Panc1 (cell line): ENCODE measurements at regions of chr19 and their contacts with region 1.

Region 1: GRCh38 chr19:44903602-44904425 is 1.8 kb upstream of the APOE start:
- DNase-seq: no peak
- ATAC-seq: peak; percentile 62
- H3K4me3 ChIP-seq: no peak overlapping the region
- H3K27ac ChIP-seq: peak overlapping the region; percentile 70; the same call in 1 of the 2 replicates
- H3K4me1 ChIP-seq: peaks cover 9% of the 10 kb centered on the region
- H3K27me3 ChIP-seq: no peaks in the 10 kb centered on the region
- CTCF ChIP-seq: peak; percentile 98

Region 2: DNA sequence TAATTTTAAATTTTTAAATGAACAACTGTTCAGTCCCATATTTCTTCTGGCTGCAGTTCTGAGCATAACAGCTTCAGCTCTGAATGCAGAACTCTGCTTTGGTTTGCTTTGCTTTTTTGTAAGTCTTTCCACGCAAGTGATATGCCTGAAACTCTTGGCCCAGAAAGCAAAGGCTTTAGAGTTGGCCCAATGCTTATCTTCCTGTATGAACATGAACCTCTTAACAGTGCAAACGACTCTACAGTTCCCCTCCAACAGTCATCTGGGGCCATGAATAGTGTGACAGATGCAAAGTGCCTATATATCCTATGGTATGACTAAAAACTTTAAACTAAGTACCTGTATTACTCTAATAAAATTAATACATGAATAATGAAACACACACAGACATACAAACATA is 562.0 kb before region 1 on chr19:
- CTCF ChIA-PET with region 1: interaction called, 12 read pairs
- POLR2A ChIA-PET with region 1: no interaction called
- in situ Hi-C with region 1: no loop called
- intact Hi-C with region 1: no loop called
- DNase-seq: no peak
- ATAC-seq: no peak
- H3K4me3 ChIP-seq: no peak overlapping the region
- H3K27ac ChIP-seq: no peak overlapping the region
- H3K4me1 ChIP-seq: no peaks in the 10 kb centered on the region
- H3K27me3 ChIP-seq: no peaks in the 10 kb centered on the region
- CTCF ChIP-seq: no peak

Region 3: DNA sequence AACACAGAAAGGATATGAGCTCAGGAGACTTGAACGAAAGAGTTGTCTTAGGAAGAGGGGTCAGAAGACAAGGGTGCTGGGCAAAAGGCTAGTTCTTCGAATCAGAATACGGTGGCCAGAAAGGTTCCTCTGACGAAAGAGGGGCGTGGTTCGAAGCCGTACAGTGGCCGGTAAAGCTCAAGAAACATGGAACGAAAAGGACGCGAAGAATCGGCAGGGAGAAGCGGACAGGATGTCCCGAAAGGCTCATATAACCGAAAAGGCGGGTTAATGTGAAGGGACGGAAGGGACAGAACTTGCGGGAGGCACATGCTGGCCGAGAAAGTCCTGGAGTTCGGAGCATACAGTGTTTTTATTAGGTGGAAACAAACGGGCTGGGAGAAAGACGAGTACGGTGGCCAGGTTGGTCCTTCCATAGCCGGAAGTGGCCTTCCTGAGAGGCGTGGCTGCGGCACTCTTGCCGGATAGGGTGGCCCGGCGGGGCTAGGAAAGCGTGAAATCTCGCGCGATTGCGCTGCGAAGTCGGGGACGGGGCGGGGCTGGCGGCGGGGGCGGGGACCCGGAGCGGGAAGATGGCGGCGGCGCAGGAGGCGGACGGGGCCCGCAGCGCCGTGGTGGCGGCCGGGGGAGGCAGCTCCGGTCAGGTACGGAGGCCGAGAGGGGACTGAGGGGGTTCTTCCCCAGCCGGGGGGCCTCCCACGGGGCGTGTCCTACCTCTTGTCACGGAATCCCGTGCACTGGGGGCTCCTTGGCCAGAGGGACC is 51.2 kb after region 1 on chr19 and contains the start of gene CLPTM1:
- CTCF ChIA-PET with region 1: interaction called, 6 read pairs
- POLR2A ChIA-PET with region 1: no interaction called
- in situ Hi-C with region 1: no loop called
- intact Hi-C with region 1: loop called (anchors 5 kb)
- DNase-seq: peak; percentile 87
- ATAC-seq: peak; percentile 96
- H3K4me3 ChIP-seq: peak within 1 kb of the TSS; percentile 97 to 98
- H3K27ac ChIP-seq: peak within 1 kb of the TSS; percentile 99
- H3K4me1 ChIP-seq: peaks cover 7% of the 10 kb centered on the region; the same call in 1 of the 2 replicates
- H3K27me3 ChIP-seq: no peaks in the 10 kb centered on the region
- CTCF ChIP-seq: no peak
- total RNA-seq, gene CLPTM1: 98.4 TPM

Region 4: GRCh38 chr19:44987148-44987675 is 83.4 kb after region 1 on chr19:
- CTCF ChIA-PET with region 1: no interaction called
- POLR2A ChIA-PET with region 1: no interaction called
- in situ Hi-C with region 1: no loop called
- intact Hi-C with region 1: no loop called
- DNase-seq: no peak
- ATAC-seq: no peak
- H3K4me3 ChIP-seq: no peak overlapping the region
- H3K27ac ChIP-seq: no peak overlapping the region
- H3K4me1 ChIP-seq: no peaks in the 10 kb centered on the region
- H3K27me3 ChIP-seq: no peaks in the 10 kb centered on the region
- CTCF ChIP-seq: no peak